Naive thymus-derived CD4-positive, alpha-beta T cell (primary cell): ENCODE measurements at regions of chr19 and their contacts with region 1.

Region 1: DNA sequence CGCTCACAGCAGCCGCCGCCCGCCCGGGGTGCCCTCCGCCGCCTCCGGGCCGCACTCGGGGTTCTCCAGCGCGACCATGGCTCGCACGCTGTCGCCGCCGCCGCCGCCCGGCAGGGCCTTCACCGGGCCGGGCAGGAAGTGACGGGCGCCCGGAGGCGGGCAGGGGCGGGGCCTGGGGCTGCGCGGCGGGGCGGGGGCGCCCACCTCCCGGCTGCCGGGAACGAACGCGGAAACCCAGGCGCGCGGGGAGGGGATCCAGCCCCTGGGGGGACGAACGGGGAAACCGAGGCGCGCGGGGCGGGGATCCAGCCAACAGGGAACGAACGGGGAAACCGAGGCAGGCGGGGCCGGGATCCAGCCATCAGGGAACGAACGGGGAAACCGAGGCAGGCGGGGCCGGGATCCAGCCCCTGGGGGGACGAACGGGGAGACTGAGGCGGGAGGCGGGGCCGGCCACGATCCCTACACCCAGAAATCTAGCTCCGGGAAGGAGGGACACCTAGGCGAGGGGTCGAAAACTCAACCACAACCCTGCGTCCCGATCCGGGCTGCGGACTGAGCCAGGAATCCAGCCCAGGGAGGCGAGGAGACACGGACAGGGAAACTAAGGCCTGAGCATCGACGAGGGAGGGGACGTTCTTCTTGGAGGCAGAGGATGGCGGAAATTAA is at the start of gene R3HDM4:
- DNase-seq: peak; percentile 75 to 92 (median 83)
- ATAC-seq: peak; percentile 75
- H3K4me3 ChIP-seq: peak within 1 kb of the TSS; percentile 93
- H3K4me3 Mint-ChIP-seq: peak within 1 kb of the TSS; percentile 72 to 92 (median 88)
- H3K27ac ChIP-seq: peak within 1 kb of the TSS; percentile 100
- H3K27ac Mint-ChIP-seq: peak within 1 kb of the TSS; percentile 83 to 97 (median 95)
- H3K4me1 ChIP-seq: peaks cover 25 to 27% of the 10 kb centered on the region in 2 donors
- H3K4me1 Mint-ChIP-seq: peaks cover 19 to 54% (median 35%) of the 10 kb centered on the region in 7 donors
- H3K27me3 ChIP-seq: no peaks in the 10 kb centered on the region
- H3K27me3 Mint-ChIP-seq: peaks cover 0 to 2% (median 0%) of the 10 kb centered on the region in 5 donors
- total RNA-seq, gene R3HDM4: 123 to 219 (median 184) TPM

Region 2: GRCh38 chr19:872266-872951 is 40.8 kb before region 1 on chr19:
- CTCF ChIA-PET with region 1: no interaction called
- POLR2A ChIA-PET with region 1: interaction called, 82 read pairs
- intact Hi-C with region 1: loop called (anchors 1 kb)
- DNase-seq: peak; percentile 63 to 91 (median 80)
- ATAC-seq: peak; percentile 86
- H3K4me3 ChIP-seq: peak overlapping the region; percentile 37
- H3K4me3 Mint-ChIP-seq: peak overlapping the region; percentile 72 to 86 (median 82)
- H3K27ac ChIP-seq: peak overlapping the region; percentile 54
- H3K27ac Mint-ChIP-seq: peak overlapping the region; percentile 86 to 95 (median 92)
- H3K4me1 ChIP-seq: peaks cover 8 to 14% of the 10 kb centered on the region in 2 donors
- H3K4me1 Mint-ChIP-seq: peaks cover 0 to 27% (median 12%) of the 10 kb centered on the region in 7 donors
- H3K27me3 ChIP-seq: no peaks in the 10 kb centered on the region
- H3K27me3 Mint-ChIP-seq: peaks cover 0 to 2% (median 0%) of the 10 kb centered on the region in 5 donors

Region 3: GRCh38 chr19:900302-901111 is 12.7 kb before region 1 on chr19:
- CTCF ChIA-PET with region 1: interaction called, 4 read pairs
- POLR2A ChIA-PET with region 1: interaction called, 196 read pairs
- intact Hi-C with region 1: no loop called
- DNase-seq: peak in 1 of 9 donors; percentile 45
- ATAC-seq: peak; percentile 77
- H3K4me3 ChIP-seq: no peak overlapping the region
- H3K4me3 Mint-ChIP-seq: no peak overlapping the region
- H3K27ac ChIP-seq: peak overlapping the region; percentile 40
- H3K27ac Mint-ChIP-seq: peak overlapping the region in 6 of 9 donors; percentile 28 to 88 (median 63)
- H3K4me1 ChIP-seq: peaks cover 0 to 10% of the 10 kb centered on the region in 2 donors
- H3K4me1 Mint-ChIP-seq: peaks cover 6 to 37% (median 23%) of the 10 kb centered on the region in 7 donors
- H3K27me3 ChIP-seq: no peaks in the 10 kb centered on the region
- H3K27me3 Mint-ChIP-seq: no peaks in the 10 kb centered on the region

Region 4: GRCh38 chr19:1295169-1296012 is 382.2 kb after region 1 on chr19:
- CTCF ChIA-PET with region 1: no interaction called
- POLR2A ChIA-PET with region 1: no interaction called
- intact Hi-C with region 1: no loop called
- DNase-seq: peak in 2 of 9 donors; percentile 29 to 64
- ATAC-seq: peak; percentile 85
- H3K4me3 ChIP-seq: no peak overlapping the region
- H3K4me3 Mint-ChIP-seq: peak overlapping the region in 5 of 10 donors; percentile 21 to 71 (median 32)
- H3K27ac ChIP-seq: no peak overlapping the region
- H3K27ac Mint-ChIP-seq: no peak overlapping the region
- H3K4me1 ChIP-seq: no peaks in the 10 kb centered on the region
- H3K4me1 Mint-ChIP-seq: peaks cover 0 to 5% (median 4%) of the 10 kb centered on the region in 7 donors
- H3K27me3 ChIP-seq: no peaks in the 10 kb centered on the region
- H3K27me3 Mint-ChIP-seq: peaks cover 3 to 15% (median 6%) of the 10 kb centered on the region in 5 donors